PC-3 (cell line): ENCODE measurements at regions of chr10 and their contacts with region 1.

Region 1: DNA sequence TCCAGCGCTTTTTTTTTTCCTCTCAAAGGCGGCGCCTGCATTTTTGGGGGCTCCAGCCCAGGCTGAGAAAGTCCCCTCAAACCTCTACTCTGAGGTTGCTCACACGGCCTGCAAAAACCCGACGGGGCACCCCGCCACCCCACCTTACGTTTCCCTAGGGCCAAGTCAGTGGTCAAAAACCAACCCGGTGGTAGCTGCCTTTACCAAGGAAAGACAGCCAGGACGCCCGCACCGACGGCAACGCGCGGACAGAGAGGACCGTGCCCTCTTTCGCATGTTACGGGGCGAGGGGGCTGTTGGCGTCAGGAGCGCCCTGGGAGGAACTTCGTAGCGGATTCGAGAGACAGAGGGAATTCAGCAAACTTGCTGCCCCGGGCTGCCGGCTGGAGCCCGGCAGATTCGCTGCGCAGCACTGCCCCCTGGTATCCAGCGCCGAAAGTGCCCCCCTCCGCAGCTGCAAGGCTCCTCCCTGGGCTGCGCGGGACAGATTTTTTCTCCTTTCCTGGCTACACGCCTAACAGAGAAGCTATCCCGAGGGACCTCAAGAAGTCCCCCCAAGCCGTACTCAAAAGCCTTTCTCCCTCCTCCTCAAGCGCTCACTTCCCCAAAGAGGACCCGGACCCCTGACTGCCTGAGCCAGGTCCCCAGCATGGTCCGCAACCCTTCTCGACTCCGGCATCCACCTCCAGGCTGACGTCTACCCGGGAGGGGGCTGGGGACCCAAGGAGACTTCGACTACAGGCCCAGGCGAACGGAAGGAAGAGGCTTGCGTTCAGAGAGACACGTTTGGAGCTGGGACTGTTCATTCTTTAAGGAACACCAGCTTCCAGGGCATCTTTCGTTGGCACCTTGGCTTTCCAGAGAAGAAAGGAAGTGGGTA is 27.7 kb upstream of the VAX1 start:
- DNase-seq: peak; percentile 63
- ATAC-seq: peak; percentile 68
- H3K4me3 ChIP-seq: peak overlapping the region; percentile 53; the same call in 1 of the 2 replicates
- H3K27ac ChIP-seq: no peak overlapping the region
- H3K4me1 ChIP-seq: peaks cover 11% of the 10 kb centered on the region; the same call in 1 of the 2 replicates
- H3K27me3 ChIP-seq: peaks cover 55% of the 10 kb centered on the region
- CTCF ChIP-seq: peak; percentile 63

Region 2: DNA sequence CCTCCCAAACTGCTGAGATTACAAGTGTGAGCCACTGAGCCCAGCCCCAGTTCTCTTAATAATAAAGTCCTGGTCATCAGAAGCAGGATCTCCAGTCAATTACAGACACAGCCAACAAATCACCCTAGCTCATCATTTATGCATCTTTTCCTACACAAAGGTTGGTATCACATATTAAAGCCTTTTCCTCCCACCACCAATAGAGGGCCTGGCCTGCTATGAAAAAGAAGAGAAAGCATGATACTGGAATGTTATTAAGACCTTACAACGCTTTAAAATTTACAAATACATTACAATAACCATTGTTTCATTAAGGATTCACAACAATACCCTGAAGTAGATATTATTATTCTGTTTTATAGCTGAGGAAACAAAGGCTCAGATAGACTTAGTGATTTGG is 53.6 kb before region 1 on chr10:
- CTCF ChIA-PET with region 1: no interaction called
- POLR2A ChIA-PET with region 1: no interaction called
- intact Hi-C with region 1: loop called (anchors 2 kb)
- DNase-seq: peak; percentile 25
- ATAC-seq: peak; percentile 56
- H3K4me3 ChIP-seq: no peak overlapping the region
- H3K27ac ChIP-seq: no peak overlapping the region
- H3K4me1 ChIP-seq: no peaks in the 10 kb centered on the region
- H3K27me3 ChIP-seq: peaks cover 16% of the 10 kb centered on the region; the same call in 1 of the 2 replicates
- CTCF ChIP-seq: peak; percentile 62